ENCODE measurements at regions of chr5 and their contacts with region 1.

Region 1: GRCh38 chr5:32628048-32628803 is 42.9 kb downstream of the SUB1 start:
- DNase-seq: no peak
- H3K4me3 ChIP-seq: no peak overlapping the region
- H3K27ac ChIP-seq: no peak overlapping the region
- H3K4me1 ChIP-seq: no peaks in the 10 kb centered on the region
- H3K27me3 ChIP-seq: no peaks in the 10 kb centered on the region
- CTCF ChIP-seq: no peak

Region 2: GRCh38 chr5:32027717-32028321 is 600.4 kb before region 1 on chr5:
- CTCF ChIA-PET with region 1: no interaction called
- POLR2A ChIA-PET with region 1: no interaction called
- intact Hi-C with region 1: no loop called
- DNase-seq: peak; percentile 97
- H3K4me3 ChIP-seq: peak overlapping the region; percentile 27
- H3K27ac ChIP-seq: peak overlapping the region; percentile 81
- H3K4me1 ChIP-seq: peaks cover 58% of the 10 kb centered on the region
- H3K27me3 ChIP-seq: no peaks in the 10 kb centered on the region
- CTCF ChIP-seq: no peak

Region 3: DNA sequence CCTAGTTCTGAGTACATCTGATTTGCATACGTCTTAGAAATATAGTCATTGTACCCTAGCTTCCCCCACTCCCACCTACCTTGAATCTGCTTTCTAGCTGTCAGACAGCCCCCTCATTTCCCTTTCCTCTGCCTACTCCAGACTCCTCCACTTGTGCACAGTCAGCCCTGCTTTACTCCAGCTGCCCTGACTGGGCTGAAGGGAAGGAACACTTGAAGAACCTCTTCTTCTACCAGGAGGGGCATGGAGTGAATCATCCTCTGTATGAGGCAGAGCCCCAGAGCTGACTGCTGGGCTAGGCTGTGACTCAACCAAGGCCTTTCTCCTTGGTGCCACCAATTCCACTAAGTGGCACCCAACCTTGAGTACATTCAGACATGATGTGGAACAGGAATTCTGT is 165.6 kb before region 1 on chr5:
- CTCF ChIA-PET with region 1: no interaction called
- POLR2A ChIA-PET with region 1: no interaction called
- intact Hi-C with region 1: no loop called
- DNase-seq: peak; percentile 14
- H3K4me3 ChIP-seq: no peak overlapping the region
- H3K27ac ChIP-seq: no peak overlapping the region
- H3K4me1 ChIP-seq: no peaks in the 10 kb centered on the region
- H3K27me3 ChIP-seq: no peaks in the 10 kb centered on the region
- CTCF ChIP-seq: no peak

Region 4: DNA sequence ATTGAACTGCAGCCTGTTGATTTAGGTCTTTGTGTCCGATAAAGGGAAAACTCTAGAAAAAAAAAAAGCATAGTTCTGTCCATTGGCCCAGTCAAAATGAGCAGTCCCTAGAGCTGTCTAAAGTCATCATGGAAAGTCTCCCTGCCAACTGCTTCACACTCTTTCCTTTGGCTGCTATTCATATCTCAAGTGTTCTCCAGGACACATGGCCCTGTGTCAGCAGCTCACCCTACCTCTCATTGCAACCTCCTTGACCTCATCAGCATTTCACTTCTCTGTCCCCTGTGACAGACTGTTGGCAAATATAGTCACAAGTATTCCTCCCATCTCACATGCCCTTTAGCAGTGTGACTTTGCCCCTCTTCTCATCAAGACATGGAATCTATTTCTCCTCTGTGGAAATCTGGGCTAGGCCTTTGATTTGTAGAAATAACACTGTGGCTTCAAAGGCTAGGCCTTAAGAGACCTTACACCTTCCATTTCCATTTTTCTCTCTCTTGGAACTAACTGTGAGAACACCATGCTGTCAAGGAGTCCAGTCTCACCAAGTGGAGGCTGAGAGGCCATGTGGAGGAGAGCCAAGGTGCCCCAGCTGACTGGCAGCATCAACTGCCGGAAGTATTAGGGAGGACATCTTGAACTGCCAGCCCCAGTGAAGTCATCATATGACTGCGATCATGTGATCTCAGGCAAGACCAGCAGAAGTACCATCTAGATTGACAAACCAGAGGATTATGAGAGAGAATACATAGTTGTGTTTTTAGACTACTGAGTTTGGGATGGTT is 663.2 kb after region 1 on chr5:
- CTCF ChIA-PET with region 1: no interaction called
- POLR2A ChIA-PET with region 1: no interaction called
- intact Hi-C with region 1: no loop called
- DNase-seq: no peak
- H3K4me3 ChIP-seq: no peak overlapping the region
- H3K27ac ChIP-seq: no peak overlapping the region
- H3K4me1 ChIP-seq: no peaks in the 10 kb centered on the region
- H3K27me3 ChIP-seq: no peaks in the 10 kb centered on the region
- CTCF ChIP-seq: no peak

Region 5: GRCh38 chr5:33423018-33423630 is 794.9 kb after region 1 on chr5:
- CTCF ChIA-PET with region 1: no interaction called
- POLR2A ChIA-PET with region 1: no interaction called
- intact Hi-C with region 1: loop called (anchors 10 kb)
- DNase-seq: peak; percentile 48
- H3K4me3 ChIP-seq: no peak overlapping the region
- H3K27ac ChIP-seq: no peak overlapping the region
- H3K4me1 ChIP-seq: no peaks in the 10 kb centered on the region
- H3K27me3 ChIP-seq: peaks cover 21% of the 10 kb centered on the region
- CTCF ChIP-seq: peak; percentile 62